ENCODE measurements at regions of chr14 and their contacts with region 1.

Region 1: GRCh38 chr14:22973217-22974032 is 8.9 kb downstream of the AJUBA start:
- DNase-seq: peak in 3 of 5 donors; percentile 27 to 53 (median 34)
- H3K4me3 ChIP-seq: no peak overlapping the region
- H3K4me3 Mint-ChIP-seq: peak overlapping the region in 1 of 7 donors; percentile 32
- H3K27ac ChIP-seq: no peak overlapping the region
- H3K27ac Mint-ChIP-seq: peak overlapping the region in 1 of 8 donors; percentile 31
- H3K4me1 ChIP-seq: no peaks in the 10 kb centered on the region
- H3K4me1 Mint-ChIP-seq: no peaks in the 10 kb centered on the region
- H3K27me3 ChIP-seq: peaks cover 4% of the 10 kb centered on the region
- H3K27me3 Mint-ChIP-seq: peaks cover 3 to 9% of the 10 kb centered on the region in 2 donors

Region 2: DNA sequence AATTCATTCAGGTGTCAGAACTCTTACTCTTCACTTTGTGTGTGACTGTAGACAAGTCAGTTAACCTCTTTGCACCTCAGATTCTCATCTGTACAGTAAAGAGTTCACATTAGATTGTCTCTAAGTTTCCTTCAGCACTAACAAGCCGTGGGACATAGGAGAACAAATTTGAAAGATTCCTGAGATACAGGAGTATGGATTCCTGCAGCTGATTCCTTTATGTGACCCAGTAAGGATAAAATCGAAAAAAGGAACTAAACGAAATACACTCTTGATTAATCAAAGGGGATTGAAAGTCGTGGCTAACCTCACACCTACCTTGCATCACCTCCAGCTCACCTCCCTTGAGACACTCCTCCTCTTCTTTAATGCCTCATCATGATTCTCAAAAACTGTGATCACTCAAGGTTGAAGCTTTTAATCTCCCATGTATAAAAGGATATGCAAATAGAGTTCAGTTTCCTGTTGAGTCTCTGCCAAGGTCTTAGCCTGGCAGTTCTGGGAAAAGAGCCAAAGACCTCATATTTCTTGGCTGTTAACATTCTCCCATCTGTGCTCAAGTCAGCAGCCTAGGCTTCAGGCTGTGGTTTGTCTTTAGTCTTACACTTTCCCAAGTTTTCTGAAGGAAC is 541.0 kb before region 1 on chr14:
- CTCF ChIA-PET with region 1: no interaction called
- POLR2A ChIA-PET with region 1: no interaction called
- DNase-seq: no peak
- H3K4me3 ChIP-seq: no peak overlapping the region
- H3K4me3 Mint-ChIP-seq: no peak overlapping the region
- H3K27ac ChIP-seq: no peak overlapping the region
- H3K27ac Mint-ChIP-seq: no peak overlapping the region
- H3K4me1 ChIP-seq: no peaks in the 10 kb centered on the region
- H3K4me1 Mint-ChIP-seq: no peaks in the 10 kb centered on the region
- H3K27me3 ChIP-seq: no peaks in the 10 kb centered on the region
- H3K27me3 Mint-ChIP-seq: no peaks in the 10 kb centered on the region

Region 3: GRCh38 chr14:22955702-22956569 is 17.5 kb before region 1 on chr14:
- CTCF ChIA-PET with region 1: interaction called, 15 read pairs
- POLR2A ChIA-PET with region 1: interaction called, 3 read pairs
- DNase-seq: no peak
- H3K4me3 ChIP-seq: peak overlapping the region; percentile 87
- H3K4me3 Mint-ChIP-seq: peak overlapping the region; percentile 89 to 96 (median 91)
- H3K27ac ChIP-seq: peak overlapping the region; percentile 84
- H3K27ac Mint-ChIP-seq: peak overlapping the region; percentile 67 to 97 (median 90)
- H3K4me1 ChIP-seq: peaks cover 19% of the 10 kb centered on the region
- H3K4me1 Mint-ChIP-seq: peaks cover 14 to 24% (median 17%) of the 10 kb centered on the region in 3 donors
- H3K27me3 ChIP-seq: no peaks in the 10 kb centered on the region
- H3K27me3 Mint-ChIP-seq: no peaks in the 10 kb centered on the region

Region 4: GRCh38 chr14:22962061-22962676 is 11.3 kb before region 1 on chr14:
- CTCF ChIA-PET with region 1: interaction called, 15 read pairs
- POLR2A ChIA-PET with region 1: no interaction called
- DNase-seq: no peak
- H3K4me3 ChIP-seq: no peak overlapping the region
- H3K4me3 Mint-ChIP-seq: no peak overlapping the region
- H3K27ac ChIP-seq: no peak overlapping the region
- H3K27ac Mint-ChIP-seq: no peak overlapping the region
- H3K4me1 ChIP-seq: peaks cover 6% of the 10 kb centered on the region
- H3K4me1 Mint-ChIP-seq: peaks cover 0 to 1% (median 0%) of the 10 kb centered on the region in 3 donors
- H3K27me3 ChIP-seq: no peaks in the 10 kb centered on the region
- H3K27me3 Mint-ChIP-seq: peaks cover 2 to 5% of the 10 kb centered on the region in 2 donors

Region 5: DNA sequence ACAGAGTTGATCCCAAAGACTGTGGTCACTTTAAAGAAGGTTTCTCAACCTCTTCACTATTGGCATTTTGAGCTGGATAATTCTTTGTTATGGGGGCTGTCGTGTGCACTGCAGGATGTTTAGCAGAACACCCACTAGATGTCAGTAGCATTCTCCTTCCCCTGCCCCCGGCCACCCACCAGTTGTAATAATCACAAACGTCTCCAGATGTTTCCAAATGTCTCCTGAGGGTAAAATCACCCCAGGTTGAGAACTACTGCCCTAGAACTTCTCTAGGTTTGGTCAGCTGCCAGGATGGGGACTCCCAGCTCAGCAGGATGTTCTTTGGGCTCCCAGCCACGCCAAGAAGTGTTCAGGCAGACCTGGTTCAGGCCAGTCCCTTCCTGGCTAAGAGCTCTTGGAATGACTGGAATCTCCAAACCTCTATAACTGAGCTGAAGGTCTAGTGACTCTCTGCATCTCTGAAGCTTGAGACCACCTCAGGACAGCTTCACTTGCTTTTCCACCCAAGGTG is 21.4 kb after region 1 on chr14:
- CTCF ChIA-PET with region 1: interaction called, 155 read pairs
- POLR2A ChIA-PET with region 1: no interaction called
- DNase-seq: peak in 2 of 5 donors; percentile 39 to 51
- H3K4me3 ChIP-seq: no peak overlapping the region
- H3K4me3 Mint-ChIP-seq: no peak overlapping the region
- H3K27ac ChIP-seq: no peak overlapping the region
- H3K27ac Mint-ChIP-seq: peak overlapping the region in 1 of 8 donors; percentile 19
- H3K4me1 ChIP-seq: no peaks in the 10 kb centered on the region
- H3K4me1 Mint-ChIP-seq: peaks cover 0 to 5% (median 0%) of the 10 kb centered on the region in 3 donors
- H3K27me3 ChIP-seq: no peaks in the 10 kb centered on the region
- H3K27me3 Mint-ChIP-seq: no peaks in the 10 kb centered on the region

Measured in CD8-positive, alpha-beta memory T cell (primary cell).